ENCODE measurements at regions of chr2 and their contacts with region 1.

Region 1: DNA sequence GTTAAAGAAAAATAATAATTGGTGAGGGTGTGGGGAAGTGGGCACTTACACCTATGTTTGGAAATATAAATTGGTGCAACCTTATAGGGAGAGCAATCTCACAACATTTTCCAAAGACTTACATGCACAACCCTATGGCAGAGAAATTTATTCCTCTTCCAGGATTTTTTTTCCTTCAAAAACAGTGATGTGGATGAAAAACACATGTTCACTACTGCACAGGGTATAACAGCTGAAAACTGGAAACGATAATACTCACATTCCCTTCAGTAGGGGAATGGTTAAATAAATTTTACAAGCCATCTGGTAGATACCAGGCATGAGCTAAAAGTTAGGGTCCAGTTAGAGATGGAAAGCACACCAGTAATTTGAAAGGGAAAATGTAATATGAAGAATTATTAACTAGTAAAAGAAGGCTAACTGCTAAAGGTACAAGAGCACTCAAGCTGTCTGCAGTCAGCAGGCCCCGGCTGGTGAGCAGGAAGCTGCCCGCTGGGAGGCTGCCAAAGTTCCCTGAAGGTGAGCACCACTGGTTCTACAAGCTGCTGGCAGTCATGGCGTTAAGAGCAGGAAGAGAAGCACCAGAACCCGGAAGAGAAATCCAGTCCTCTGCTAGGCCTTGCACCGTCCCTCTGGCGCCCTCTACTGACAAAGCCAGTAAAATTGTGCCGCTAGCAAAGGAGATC is 28.4 kb upstream of the CASP8 start:
- DNase-seq: peak; percentile 77 to 96 (median 92)
- ATAC-seq: peak; percentile 46
- H3K4me3 ChIP-seq: peak overlapping the region in 1 of 2 experiments; percentile 4
- H3K4me3 Mint-ChIP-seq: peak overlapping the region; percentile 58
- H3K27ac ChIP-seq: peak overlapping the region in 1 of 2 experiments; percentile 47
- H3K27ac Mint-ChIP-seq: peak overlapping the region; percentile 89
- H3K4me1 ChIP-seq: peaks cover 40% of the 10 kb centered on the region
- H3K4me1 Mint-ChIP-seq: peaks cover 60% of the 10 kb centered on the region
- H3K27me3 ChIP-seq: no peaks in the 10 kb centered on the region
- H3K27me3 Mint-ChIP-seq: no peaks in the 10 kb centered on the region
- CTCF ChIP-seq: peak; percentile 91

Region 2: GRCh38 chr2:200864176-200864976 is 367.5 kb before region 1 on chr2 and contains the start of gene CLK1:
- CTCF ChIA-PET with region 1: no interaction called
- POLR2A ChIA-PET with region 1: interaction called, 10 read pairs
- intact Hi-C with region 1: no loop called
- DNase-seq: peak; percentile 94 to 99 (median 98)
- ATAC-seq: peak; percentile 78
- H3K4me3 ChIP-seq: peak within 1 kb of the TSS; percentile 84 to 98
- H3K4me3 Mint-ChIP-seq: peak within 1 kb of the TSS; percentile 96
- H3K27ac ChIP-seq: peak within 1 kb of the TSS; percentile 98 to 100
- H3K27ac Mint-ChIP-seq: peak within 1 kb of the TSS; percentile 100
- H3K4me1 ChIP-seq: peaks cover 29% of the 10 kb centered on the region
- H3K4me1 Mint-ChIP-seq: peaks cover 43% of the 10 kb centered on the region
- H3K27me3 ChIP-seq: no peaks in the 10 kb centered on the region
- H3K27me3 Mint-ChIP-seq: no peaks in the 10 kb centered on the region
- CTCF ChIP-seq: no peak
- total RNA-seq, gene CLK1: 1,353 to 1,404 TPM

Region 3: DNA sequence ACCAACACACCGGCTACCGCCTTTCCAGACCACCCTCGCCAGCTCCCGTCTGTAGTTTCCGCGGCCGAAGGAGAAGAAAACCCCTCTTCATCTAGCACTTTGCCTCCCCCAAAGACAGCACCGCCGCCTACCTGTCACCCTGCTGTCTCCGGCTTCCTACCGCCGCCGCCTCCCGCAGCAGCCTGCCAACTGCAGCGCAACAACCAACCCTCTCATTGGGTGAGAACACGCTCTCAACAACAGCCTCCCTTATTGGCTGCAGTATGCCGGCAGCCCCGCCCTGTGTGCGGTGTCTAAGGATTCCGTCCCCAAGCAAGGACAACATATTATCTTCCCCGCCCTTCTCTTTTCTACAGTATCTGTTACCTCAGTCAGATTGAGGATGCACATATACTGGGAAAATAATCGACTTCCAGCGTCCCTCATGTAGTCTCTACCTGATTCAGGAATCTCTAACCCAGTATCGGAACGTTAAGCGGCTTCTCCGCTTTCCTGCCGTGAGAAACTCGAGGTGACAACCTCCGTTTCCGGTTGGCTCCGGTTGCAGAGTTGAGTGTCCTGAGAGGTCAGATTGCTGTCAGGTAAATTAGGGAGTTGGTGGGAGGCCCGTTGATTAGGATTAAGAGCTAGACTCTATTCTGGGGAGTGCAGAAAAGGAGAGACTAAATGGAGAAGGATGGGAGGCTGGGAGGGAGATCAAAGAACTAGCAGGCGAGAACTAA is 160.3 kb before region 1 on chr2 and contains the starts of genes HYCC2 and NDUFB3:
- CTCF ChIA-PET with region 1: interaction called, 27 read pairs
- POLR2A ChIA-PET with region 1: interaction called, 4 read pairs
- intact Hi-C with region 1: loop called (anchors 1 to 2 kb)
- DNase-seq: peak; percentile 79 to 98 (median 92)
- ATAC-seq: peak; percentile 93
- H3K4me3 ChIP-seq: peak within 1 kb of the TSS; percentile 61 to 70
- H3K4me3 Mint-ChIP-seq: peak within 1 kb of the TSS; percentile 95
- H3K27ac ChIP-seq: peak within 1 kb of the TSS; percentile 61 to 81
- H3K27ac Mint-ChIP-seq: peak within 1 kb of the TSS; percentile 97
- H3K4me1 ChIP-seq: peaks cover 42% of the 10 kb centered on the region
- H3K4me1 Mint-ChIP-seq: peaks cover 54% of the 10 kb centered on the region
- H3K27me3 ChIP-seq: no peaks in the 10 kb centered on the region
- H3K27me3 Mint-ChIP-seq: no peaks in the 10 kb centered on the region
- CTCF ChIP-seq: peak; percentile 38
- total RNA-seq, gene HYCC2: 35.7 to 36.8 TPM
- total RNA-seq, gene NDUFB3: 11.6 to 13.1 TPM

Region 4: DNA sequence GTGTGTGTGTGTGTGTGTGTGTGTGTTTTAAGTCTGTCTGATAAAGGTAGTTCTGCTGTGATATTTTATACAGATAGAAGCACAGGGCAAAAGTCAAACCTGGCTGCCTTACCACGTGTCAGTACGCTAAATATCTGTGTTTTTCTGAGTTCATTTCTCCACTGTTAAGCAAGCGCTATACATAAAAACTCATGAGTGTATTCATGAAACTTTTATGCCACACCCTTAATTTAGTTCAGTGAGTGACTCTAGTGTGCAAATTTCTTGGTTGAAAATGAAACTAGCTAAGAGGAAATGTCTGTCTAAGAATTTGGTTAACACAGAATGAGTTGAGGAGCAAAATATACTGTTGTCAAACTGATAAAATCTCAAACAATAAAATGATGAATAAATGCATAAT is 37.8 kb before region 1 on chr2:
- CTCF ChIA-PET with region 1: interaction called, 62 read pairs
- POLR2A ChIA-PET with region 1: interaction called, 5 read pairs
- intact Hi-C with region 1: no loop called
- DNase-seq: peak in 2 of 9 experiments; percentile 32 to 55
- ATAC-seq: peak; percentile 55
- H3K4me3 ChIP-seq: peak overlapping the region in 1 of 2 experiments; percentile 10
- H3K4me3 Mint-ChIP-seq: peak overlapping the region; percentile 67
- H3K27ac ChIP-seq: peak overlapping the region; percentile 1 to 63
- H3K27ac Mint-ChIP-seq: peak overlapping the region; percentile 87
- H3K4me1 ChIP-seq: peaks cover 65% of the 10 kb centered on the region
- H3K4me1 Mint-ChIP-seq: peaks cover 73% of the 10 kb centered on the region
- H3K27me3 ChIP-seq: no peaks in the 10 kb centered on the region
- H3K27me3 Mint-ChIP-seq: no peaks in the 10 kb centered on the region
- CTCF ChIP-seq: no peak

Region 5: DNA sequence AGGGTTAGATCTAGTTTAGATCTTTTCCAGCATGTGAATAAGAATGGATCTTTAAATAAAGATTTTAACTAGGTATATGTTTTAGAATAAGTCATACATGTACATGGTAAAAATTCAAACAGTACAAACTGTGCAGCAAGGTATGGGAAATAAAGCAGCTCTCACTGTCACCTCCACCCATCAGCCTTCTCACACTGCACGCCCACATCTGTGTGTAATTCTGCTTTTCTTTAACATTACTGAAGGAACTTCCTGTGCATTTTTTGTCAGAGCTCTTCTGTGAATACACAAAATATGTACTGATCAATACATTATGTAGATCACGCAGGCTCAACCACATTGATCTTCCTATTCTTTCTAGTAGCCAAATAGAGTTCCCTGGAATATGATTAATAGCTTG is 31.9 kb after region 1 on chr2:
- CTCF ChIA-PET with region 1: interaction called, 76 read pairs
- POLR2A ChIA-PET with region 1: interaction called, 35 read pairs
- intact Hi-C with region 1: loop called (anchors 1 kb)
- DNase-seq: peak in 3 of 9 experiments; percentile 32 to 60 (median 37)
- ATAC-seq: no peak
- H3K4me3 ChIP-seq: peak overlapping the region; percentile 33 to 77
- H3K4me3 Mint-ChIP-seq: peak overlapping the region; percentile 74
- H3K27ac ChIP-seq: peak overlapping the region; percentile 9 to 93
- H3K27ac Mint-ChIP-seq: peak overlapping the region; percentile 92
- H3K4me1 ChIP-seq: peaks cover 66% of the 10 kb centered on the region
- H3K4me1 Mint-ChIP-seq: peaks cover 79% of the 10 kb centered on the region
- H3K27me3 ChIP-seq: no peaks in the 10 kb centered on the region
- H3K27me3 Mint-ChIP-seq: no peaks in the 10 kb centered on the region
- CTCF ChIP-seq: no peak

Region 6: DNA sequence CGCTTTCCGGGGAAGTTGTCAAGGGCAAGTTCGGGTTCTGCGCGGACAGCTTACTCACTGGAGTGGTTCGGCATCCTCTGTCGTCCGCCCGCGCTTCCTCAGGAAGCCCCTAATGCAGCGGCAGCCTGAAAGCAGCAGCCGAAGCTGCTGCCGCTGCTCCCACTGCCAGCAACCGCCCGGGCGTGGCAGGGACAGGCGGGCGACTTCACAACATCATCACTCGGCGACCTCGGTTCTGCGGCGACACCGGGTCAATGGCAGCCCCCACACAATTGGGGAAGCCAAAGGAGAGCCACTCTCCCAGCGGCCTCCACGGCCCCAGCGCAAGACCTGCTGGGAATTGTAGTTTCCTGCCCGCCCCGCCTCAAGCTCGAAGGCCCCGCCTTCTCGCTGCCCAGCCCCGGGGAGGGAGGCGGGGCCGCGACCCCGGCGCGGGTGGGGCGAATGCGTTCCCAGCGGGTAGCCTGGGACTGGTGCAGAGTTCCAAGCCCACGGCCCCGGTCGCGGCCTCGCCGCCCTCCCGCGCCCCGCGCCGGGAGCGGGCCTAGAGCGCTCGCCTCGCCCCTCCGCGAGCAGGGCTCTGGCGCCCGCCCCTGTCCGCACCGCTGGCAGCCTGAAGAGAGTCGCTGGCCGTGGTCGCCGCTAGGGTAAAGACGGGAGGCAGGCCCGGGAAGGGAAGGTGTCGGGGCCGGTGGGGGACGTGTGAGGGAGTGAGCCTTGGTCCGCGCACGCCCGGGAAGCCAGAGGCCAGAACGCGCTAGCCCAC is 219.6 kb after region 1 on chr2 and contains the starts of genes STRADB and TRAK2:
- CTCF ChIA-PET with region 1: interaction called, 5 read pairs
- POLR2A ChIA-PET with region 1: interaction called, 13 read pairs
- intact Hi-C with region 1: loop called (anchors 1 kb)
- DNase-seq: peak; percentile 89 to 98 (median 95)
- ATAC-seq: peak; percentile 89
- H3K4me3 ChIP-seq: peak within 1 kb of the TSS; percentile 64 to 79
- H3K4me3 Mint-ChIP-seq: peak within 1 kb of the TSS; percentile 96
- H3K27ac ChIP-seq: peak within 1 kb of the TSS; percentile 74 to 79
- H3K27ac Mint-ChIP-seq: peak within 1 kb of the TSS; percentile 95
- H3K4me1 ChIP-seq: peaks cover 41% of the 10 kb centered on the region
- H3K4me1 Mint-ChIP-seq: peaks cover 59% of the 10 kb centered on the region
- H3K27me3 ChIP-seq: no peaks in the 10 kb centered on the region
- H3K27me3 Mint-ChIP-seq: no peaks in the 10 kb centered on the region
- CTCF ChIP-seq: no peak
- total RNA-seq, gene STRADB: 4.5 to 5.8 TPM
- total RNA-seq, gene TRAK2: 20.1 to 22.5 TPM

Region 7: DNA sequence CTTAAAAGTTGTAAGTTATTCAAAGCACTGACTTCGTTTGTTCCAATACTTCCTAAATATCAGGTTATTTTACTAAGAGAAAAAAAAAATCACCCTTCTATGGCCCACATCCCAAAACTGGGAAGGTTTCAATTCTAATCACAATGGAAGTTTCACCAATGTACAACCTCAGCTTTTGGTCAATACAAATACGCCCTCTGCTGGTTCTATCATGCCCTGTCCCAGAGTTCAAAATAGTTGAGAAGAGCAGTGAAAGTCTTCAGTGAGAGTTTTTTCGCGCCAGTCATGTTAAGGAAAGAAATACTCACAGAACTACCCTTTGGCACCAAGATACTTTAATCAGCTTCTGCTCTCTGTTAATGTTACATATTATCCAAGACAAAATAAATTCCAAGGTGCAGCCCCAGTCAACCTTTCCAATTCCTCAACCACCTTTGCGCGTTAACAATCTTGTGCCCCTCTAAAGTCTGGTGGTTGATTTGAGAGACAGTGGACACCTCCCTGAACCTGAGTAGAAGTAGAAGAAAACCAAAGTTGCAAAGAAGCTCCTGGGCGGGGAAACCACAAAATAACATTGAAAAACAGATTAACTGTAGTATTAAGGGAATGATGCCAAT is 946.5 kb after region 1 on chr2:
- CTCF ChIA-PET with region 1: interaction called, 8 read pairs
- POLR2A ChIA-PET with region 1: no interaction called
- intact Hi-C with region 1: loop called in 1 of 2 experiments (anchors 2 kb)
- DNase-seq: peak; percentile 11 to 70 (median 52)
- ATAC-seq: peak; percentile 61
- H3K4me3 ChIP-seq: no peak overlapping the region
- H3K4me3 Mint-ChIP-seq: no peak overlapping the region
- H3K27ac ChIP-seq: no peak overlapping the region
- H3K27ac Mint-ChIP-seq: no peak overlapping the region
- H3K4me1 ChIP-seq: no peaks in the 10 kb centered on the region
- H3K4me1 Mint-ChIP-seq: no peaks in the 10 kb centered on the region
- H3K27me3 ChIP-seq: no peaks in the 10 kb centered on the region
- H3K27me3 Mint-ChIP-seq: peaks cover 10% of the 10 kb centered on the region
- CTCF ChIP-seq: peak; percentile 88

Measured in CD8-positive, alpha-beta T cell (primary cell).